Psoas muscle (tissue), 8 donors: ENCODE measurements at regions of chr6 and their contacts with region 1.

Region 1: GRCh38 chr6:150314230-150315188 is 54.3 kb upstream of the IYD start:
- DNase-seq: no peak
- ATAC-seq: no peak
- H3K4me3 ChIP-seq: no peak overlapping the region
- H3K27ac ChIP-seq: no peak overlapping the region
- H3K4me1 ChIP-seq: peaks cover 7% of the 10 kb centered on the region
- H3K27me3 ChIP-seq: no peaks in the 10 kb centered on the region
- CTCF ChIP-seq: no peak

Region 2: GRCh38 chr6:150267686-150268561 is 46.6 kb before region 1 on chr6:
- intact Hi-C with region 1: loop called in 1 of 2 experiments (anchors 2 kb)
- DNase-seq: peak; percentile 34 to 70
- ATAC-seq: peak; percentile 89 to 95 (median 92)
- H3K4me3 ChIP-seq: no peak overlapping the region
- H3K27ac ChIP-seq: peak overlapping the region; percentile 64
- H3K4me1 ChIP-seq: peaks cover 9% of the 10 kb centered on the region
- H3K27me3 ChIP-seq: no peaks in the 10 kb centered on the region
- CTCF ChIP-seq: peak; percentile 20

Region 3: DNA sequence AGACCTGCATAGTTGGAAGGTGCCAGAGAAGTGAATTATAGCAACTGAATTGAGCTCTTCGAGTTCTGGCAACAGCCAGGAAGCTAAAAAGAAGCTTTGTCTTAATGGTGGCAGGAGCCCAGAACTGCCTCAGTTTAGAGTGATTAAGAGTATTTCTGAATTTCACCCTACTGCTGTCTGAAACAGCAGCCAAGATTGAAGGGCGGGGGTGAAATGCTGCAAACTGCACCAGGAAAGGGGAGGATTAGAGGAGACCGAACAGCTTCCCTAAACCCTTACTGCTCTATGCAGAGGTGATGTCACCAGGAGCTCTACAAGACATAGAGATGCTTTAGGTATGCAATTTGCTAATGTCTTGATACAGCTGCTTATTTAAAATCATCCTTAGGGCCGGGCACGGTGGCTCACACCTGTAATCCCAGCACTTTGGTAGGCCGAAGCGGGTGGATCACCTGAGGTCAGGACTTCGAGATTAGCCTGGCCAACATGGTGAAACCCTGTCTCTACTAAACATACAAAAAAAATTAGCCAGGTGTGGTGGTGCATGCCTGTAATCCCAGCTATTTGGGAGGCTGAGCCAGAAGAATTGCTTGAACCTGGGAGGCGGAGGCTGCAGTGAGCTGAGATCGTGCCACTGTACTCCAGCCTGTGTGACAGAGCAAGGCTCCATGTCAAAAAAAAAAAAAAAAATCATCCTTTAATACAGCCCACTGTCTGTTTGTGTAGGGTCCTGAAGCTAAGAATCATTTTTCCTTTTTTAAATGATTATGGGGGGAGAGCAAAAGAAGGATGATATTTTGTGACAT is 37.4 kb before region 1 on chr6:
- intact Hi-C with region 1: loop called in 1 of 2 experiments (anchors 5 kb)
- DNase-seq: no peak
- ATAC-seq: no peak
- H3K4me3 ChIP-seq: no peak overlapping the region
- H3K27ac ChIP-seq: no peak overlapping the region
- H3K4me1 ChIP-seq: peaks cover 18% of the 10 kb centered on the region
- H3K27me3 ChIP-seq: no peaks in the 10 kb centered on the region
- CTCF ChIP-seq: no peak

Region 4: DNA sequence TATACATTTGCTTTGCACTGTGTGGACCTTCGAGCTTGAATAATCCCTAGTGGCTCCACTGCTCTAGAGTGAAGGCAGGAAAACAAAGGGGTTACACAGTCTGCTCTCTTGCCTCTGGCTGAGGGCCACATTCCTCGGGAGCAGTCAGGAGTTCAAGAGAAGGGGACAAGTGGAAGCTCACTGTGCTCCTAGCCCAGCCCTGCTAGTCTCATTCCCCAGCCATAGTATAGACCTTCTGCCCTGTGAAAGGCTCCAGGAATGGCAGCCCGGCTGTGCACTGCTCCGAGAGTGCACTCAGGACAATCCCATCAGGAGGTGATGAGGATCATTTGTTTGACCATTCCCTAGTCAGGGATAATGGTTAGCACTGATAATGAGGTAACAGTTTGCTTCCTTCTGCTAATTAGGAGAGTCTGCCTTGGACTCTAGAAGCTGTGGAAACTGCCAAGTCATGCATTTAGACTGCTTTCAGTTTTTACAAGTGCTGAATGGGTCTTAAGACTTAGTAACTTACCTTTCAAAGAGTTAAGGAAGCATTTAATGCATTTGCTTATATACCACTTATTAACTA is 62.8 kb after region 1 on chr6:
- intact Hi-C with region 1: no loop called
- DNase-seq: no peak
- ATAC-seq: no peak
- H3K4me3 ChIP-seq: no peak overlapping the region
- H3K27ac ChIP-seq: no peak overlapping the region
- H3K4me1 ChIP-seq: no peaks in the 10 kb centered on the region
- H3K27me3 ChIP-seq: no peaks in the 10 kb centered on the region
- CTCF ChIP-seq: no peak